ENCODE measurements at regions of chr11 and their contacts with region 1.

Region 1: GRCh38 chr11:131867457-131868257 is 497.2 kb downstream of the NTM start:
- DNase-seq: peak; percentile 76
- CTCF ChIP-seq: peak; percentile 68

Region 2: DNA sequence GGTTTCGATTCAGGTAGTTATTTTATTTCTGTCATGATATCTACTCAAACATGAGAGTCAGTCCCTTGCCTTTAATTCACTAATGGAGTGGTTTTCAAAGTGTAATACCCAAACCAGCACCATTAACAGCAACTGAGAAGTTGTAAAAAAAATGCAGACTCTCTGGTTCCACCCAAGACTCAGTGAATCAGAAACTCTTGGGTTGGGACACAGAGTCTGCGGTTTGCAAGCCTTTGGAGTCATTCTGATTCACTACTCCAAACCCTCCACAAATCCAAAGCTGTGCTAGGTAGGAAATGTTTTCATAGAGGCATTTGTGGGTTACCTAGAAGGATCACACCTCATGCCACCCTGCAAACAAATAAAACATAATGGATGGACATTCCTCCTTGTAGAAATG is 157.1 kb before region 1 on chr11:
- in situ Hi-C with region 1: no loop called
- DNase-seq: no peak
- CTCF ChIP-seq: no peak

Region 3: DNA sequence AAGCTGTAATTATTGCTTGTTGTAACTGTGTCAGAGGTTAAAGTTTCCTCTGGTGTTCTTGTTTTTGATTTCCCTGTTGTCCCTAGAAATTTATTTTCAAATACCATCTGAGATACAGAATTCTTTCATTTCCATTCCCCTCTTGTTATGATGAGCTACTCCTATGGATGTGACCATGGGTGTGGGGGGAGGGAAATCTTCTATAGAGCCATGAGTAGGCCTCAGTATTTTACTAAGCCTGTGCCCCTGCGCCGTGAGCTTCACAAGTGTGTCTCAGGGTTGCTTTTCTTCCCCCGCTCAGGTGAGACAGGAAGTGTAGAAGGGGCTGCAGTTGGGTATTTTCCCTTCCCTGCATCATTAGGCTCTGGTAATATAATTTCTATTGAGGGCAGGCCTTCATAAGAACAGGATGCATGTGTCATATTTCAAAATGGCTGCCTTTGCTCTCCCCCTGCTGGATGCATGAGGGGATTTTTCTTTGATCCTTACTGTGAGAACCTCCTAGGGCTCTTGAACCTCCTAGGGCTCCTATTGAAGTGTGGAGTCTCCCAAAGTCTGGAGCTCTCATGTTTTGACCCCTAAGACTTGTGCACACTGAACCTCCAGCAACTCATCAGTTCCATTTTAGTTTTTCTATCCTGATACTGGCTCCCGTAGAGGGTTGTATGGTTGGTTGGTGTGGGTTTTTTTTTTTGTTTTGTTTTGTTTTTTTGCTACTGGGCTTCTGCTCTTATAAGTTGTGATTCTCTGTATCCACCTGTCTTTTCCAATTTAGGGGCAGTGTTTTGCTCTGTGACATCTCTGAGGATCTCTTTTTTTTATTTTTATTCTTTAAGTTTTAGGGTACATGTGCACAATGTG is 161.0 kb after region 1 on chr11:
- in situ Hi-C with region 1: loop called (anchors 25 kb)
- DNase-seq: peak; percentile 17
- CTCF ChIP-seq: peak; percentile 30

Region 4: DNA sequence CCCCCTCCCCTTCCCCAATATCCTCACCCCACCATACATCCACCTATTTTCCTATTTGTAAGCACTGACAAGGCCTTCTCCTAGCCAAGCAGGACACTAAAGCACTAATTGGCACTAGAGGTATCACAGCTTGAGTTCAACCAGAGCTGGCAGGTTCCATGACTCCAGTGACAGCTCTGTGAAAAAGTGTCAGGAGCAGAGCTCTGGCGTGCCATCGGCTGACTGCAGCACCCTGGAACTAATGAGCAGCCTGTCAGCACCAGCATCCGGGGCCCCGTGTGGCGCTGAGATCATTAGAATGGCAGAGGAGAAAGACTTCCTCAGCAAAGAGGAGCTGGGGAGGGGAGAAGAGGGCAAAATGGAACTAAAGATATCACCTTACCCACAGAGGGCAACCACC is 350.2 kb after region 1 on chr11:
- in situ Hi-C with region 1: no loop called
- DNase-seq: no peak
- CTCF ChIP-seq: no peak

Measured in GM13976 (cell line).